ENCODE measurements at regions of chr5 and their contacts with region 1.

Region 1: DNA sequence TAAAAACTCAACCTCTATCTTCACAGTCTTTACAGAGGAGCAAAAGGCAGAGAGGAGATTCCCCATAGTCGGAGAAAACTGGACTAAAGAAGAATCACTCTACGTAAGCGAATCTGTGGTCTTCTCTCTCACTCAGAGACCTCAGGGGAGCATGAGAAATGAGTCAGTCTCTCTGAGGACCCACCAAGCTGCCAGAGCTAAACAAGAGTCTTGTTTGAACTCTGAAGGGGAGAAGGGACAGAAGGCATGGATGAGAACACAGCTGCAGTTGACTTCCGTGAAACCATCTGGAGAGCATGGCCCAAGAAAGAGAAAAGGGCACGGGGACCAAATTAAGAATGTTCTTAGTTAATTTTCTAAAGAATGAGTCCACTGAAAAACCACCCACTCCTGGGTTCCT is 12.8 kb upstream of the MAN2A1 start:
- DNase-seq: no peak
- H3K4me3 ChIP-seq: no peak overlapping the region
- H3K27ac ChIP-seq: no peak overlapping the region
- H3K4me1 ChIP-seq: no peaks in the 10 kb centered on the region
- H3K27me3 ChIP-seq: no peaks in the 10 kb centered on the region
- CTCF ChIP-seq: no peak
- POLR2A ChIP-seq: no peak

Region 2: GRCh38 chr5:109788596-109788995 is 111.7 kb after region 1 on chr5:
- intact Hi-C with region 1: no loop called
- DNase-seq: no peak
- H3K4me3 ChIP-seq: no peak overlapping the region
- H3K27ac ChIP-seq: no peak overlapping the region
- H3K4me1 ChIP-seq: no peaks in the 10 kb centered on the region
- H3K27me3 ChIP-seq: no peaks in the 10 kb centered on the region
- CTCF ChIP-seq: no peak
- POLR2A ChIP-seq: no peak

Region 3: DNA sequence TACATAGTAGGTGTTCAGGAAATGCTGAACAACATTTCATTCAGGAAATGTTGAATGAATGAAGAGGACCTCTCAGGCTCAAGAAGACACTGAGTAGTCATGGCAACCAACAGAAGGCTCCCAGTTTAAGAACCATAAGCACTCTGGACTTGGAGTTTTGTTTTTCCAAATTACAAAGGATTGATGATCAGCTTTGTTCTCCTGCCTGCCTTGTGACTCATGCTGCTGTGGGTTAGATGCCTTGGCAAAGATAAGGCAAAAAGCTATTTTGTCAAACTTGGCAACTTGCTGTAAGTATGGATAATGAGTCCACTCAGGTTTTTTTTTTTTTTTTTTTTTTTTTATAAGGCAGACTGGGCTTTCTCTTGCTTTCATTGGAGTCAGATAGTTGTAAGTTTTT is 684.5 kb after region 1 on chr5:
- intact Hi-C with region 1: loop called (anchors 5 kb)
- DNase-seq: no peak
- H3K4me3 ChIP-seq: no peak overlapping the region
- H3K27ac ChIP-seq: no peak overlapping the region
- H3K4me1 ChIP-seq: no peaks in the 10 kb centered on the region
- H3K27me3 ChIP-seq: no peaks in the 10 kb centered on the region
- CTCF ChIP-seq: no peak
- POLR2A ChIP-seq: no peak

Measured in breast epithelium (tissue), 4 donors.